GM12878 (cell line): ENCODE measurements at regions of chr14 and their contacts with region 1.

Region 1: DNA sequence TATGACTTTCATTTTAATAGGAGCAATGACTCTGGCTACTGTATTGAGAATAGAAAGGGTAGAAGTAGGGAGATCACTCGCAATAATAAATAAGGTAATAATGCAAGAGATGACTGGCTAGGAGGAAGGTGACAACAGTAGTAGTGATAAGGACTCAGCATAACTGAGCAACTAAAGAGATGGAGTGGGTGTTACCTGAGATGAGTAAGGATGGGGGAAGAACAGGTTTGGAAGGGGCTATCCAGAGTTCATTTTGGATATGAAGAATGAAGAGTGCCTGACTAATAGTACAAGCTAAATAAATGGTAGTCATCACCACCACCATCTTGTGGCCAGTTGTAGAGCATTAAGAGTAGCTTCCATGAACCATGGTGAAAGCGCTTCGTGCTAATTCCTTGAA is 101.1 kb downstream of the RPS6KA5 start:
- DNase-seq: no peak
- ATAC-seq: no peak
- H3K4me3 ChIP-seq: no peak overlapping the region
- H3K27ac ChIP-seq: no peak overlapping the region
- H3K4me1 ChIP-seq: no peaks in the 10 kb centered on the region
- H3K27me3 ChIP-seq: no peaks in the 10 kb centered on the region
- CTCF ChIP-seq: no peak
- EP300 ChIP-seq: no peak
- POLR2A ChIP-seq: no peak
- RAD21 ChIP-seq: no peak

Region 2: GRCh38 chr14:90970167-90970600 is 10.8 kb after region 1 on chr14:
- CTCF ChIA-PET with region 1: interaction called, 14 read pairs
- POLR2A ChIA-PET with region 1: no interaction called
- RAD21 ChIA-PET with region 1: no interaction called
- SMC1A ChIA-PET with region 1: interaction called, 4 read pairs
- in situ Hi-C with region 1: no loop called
- intact Hi-C with region 1: no loop called
- DNase-seq: no peak
- ATAC-seq: peak; percentile 94
- H3K4me3 ChIP-seq: no peak overlapping the region
- H3K27ac ChIP-seq: no peak overlapping the region
- H3K4me1 ChIP-seq: peaks cover 13% of the 10 kb centered on the region
- H3K27me3 ChIP-seq: no peaks in the 10 kb centered on the region
- CTCF ChIP-seq: no peak
- EP300 ChIP-seq: peak in 1 of 2 experiments; percentile 42; a peak in 1 of 4 replicates
- POLR2A ChIP-seq: no peak
- RAD21 ChIP-seq: no peak